ENCODE measurements at regions of chr18 and their contacts with region 1.

Region 1: GRCh38 chr18:57389271-57389670 is 36.9 kb downstream of the ST8SIA3 start:
- DNase-seq: no peak
- H3K4me3 Mint-ChIP-seq: no peak overlapping the region
- H3K27ac Mint-ChIP-seq: no peak overlapping the region
- H3K4me1 Mint-ChIP-seq: no peaks in the 10 kb centered on the region
- H3K27me3 Mint-ChIP-seq: peaks cover 7% of the 10 kb centered on the region

Region 2: DNA sequence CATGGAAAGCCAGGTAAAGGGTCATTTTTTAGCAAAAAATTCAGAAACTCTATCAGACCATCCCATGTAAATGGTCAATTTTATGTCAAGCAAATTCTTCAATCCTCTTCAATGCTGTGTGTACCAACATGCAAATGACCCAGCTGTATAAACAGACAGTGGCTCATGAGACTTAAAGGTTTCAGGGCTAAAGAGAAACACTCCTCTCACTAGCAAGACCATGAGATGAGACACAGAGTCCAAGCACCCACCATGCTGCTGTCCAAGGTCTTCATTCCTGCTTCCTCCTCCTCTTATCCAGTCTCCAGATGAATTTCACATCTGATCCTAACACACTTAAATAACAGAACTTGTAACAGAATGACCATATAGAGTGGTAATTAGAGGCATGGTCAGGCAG is 15.1 kb after region 1 on chr18:
- CTCF ChIA-PET with region 1: no interaction called
- POLR2A ChIA-PET with region 1: no interaction called
- intact Hi-C with region 1: loop called (anchors 1 kb)
- DNase-seq: no peak
- H3K4me3 Mint-ChIP-seq: no peak overlapping the region
- H3K27ac Mint-ChIP-seq: no peak overlapping the region
- H3K4me1 Mint-ChIP-seq: no peaks in the 10 kb centered on the region
- H3K27me3 Mint-ChIP-seq: peaks cover 1% of the 10 kb centered on the region

Measured in activated CD4-positive, alpha-beta memory T cell treated with anti-CD3 and anti-CD28 coated beads for 36 hours (primary cell).